ENCODE measurements at regions of chr3 and their contacts with region 1.

Region 1: GRCh38 chr3:105869861-105870755 is 1.3 kb upstream of the CBLB start:
- H3K4me3 Mint-ChIP-seq: peak overlapping the region; percentile 95
- H3K27ac Mint-ChIP-seq: peak overlapping the region; percentile 96
- H3K4me1 Mint-ChIP-seq: peaks cover 28% of the 10 kb centered on the region
- H3K27me3 Mint-ChIP-seq: no peaks in the 10 kb centered on the region

Region 2: DNA sequence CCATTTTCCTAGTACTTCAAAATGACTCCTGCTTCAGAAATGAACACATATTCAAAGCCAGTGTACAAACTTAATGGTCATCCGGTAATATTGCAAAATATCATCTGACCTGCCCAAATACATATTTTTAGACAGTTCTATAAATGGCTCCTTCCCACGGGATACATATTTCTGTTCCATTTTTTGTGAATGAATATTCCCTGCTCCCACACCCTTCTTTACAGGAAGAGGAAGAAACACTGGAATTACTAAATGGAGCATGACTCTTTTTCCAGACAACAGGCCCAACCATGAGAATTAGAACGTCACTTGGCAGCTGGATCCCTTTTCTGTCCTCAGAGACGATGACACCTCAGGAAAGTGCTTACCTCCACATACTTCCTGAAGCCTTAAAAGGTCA is 36.7 kb after region 1 on chr3:
- intact Hi-C with region 1: loop called (anchors 5 kb)
- H3K4me3 Mint-ChIP-seq: no peak overlapping the region
- H3K27ac Mint-ChIP-seq: peak overlapping the region; percentile 79
- H3K4me1 Mint-ChIP-seq: peaks cover 5% of the 10 kb centered on the region
- H3K27me3 Mint-ChIP-seq: no peaks in the 10 kb centered on the region